ENCODE measurements at regions of chr14 and their contacts with region 1.

Region 1: DNA sequence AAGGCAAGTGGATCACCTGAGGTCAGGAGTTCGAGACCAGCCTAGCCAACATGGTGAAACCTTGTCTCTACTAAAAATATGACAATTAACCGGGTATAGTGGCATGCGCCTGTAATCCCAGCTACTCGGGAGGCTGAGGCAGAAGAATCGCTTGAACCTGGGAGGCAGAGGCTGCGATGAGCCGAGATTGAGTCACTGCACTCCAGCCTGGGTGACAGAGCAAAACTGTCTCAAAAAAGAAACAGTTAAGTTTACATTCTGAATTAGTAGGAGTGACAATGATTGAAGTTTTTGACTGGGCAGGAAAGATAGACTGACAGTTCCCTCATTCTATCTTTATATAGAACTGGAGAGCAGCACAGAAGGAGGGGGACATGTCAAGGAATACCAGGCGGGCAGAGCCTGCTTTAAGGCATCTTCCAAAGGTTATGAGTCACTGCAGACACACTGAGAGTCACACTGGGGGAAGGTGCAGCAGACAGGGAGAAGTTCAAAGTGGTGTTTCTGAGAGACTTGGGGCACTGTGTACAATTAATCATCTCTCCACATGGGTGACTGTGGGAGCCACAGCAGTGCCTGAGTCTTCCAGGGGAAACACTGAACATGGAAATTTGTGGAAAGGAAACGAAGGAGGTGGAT is 42.8 kb upstream of the RNASE3 start:
- DNase-seq: no peak
- H3K4me3 ChIP-seq: no peak overlapping the region
- H3K4me3 Mint-ChIP-seq: peak overlapping the region; percentile 38
- H3K27ac Mint-ChIP-seq: peak overlapping the region; percentile 82
- H3K4me1 ChIP-seq: peaks cover 15% of the 10 kb centered on the region
- H3K4me1 Mint-ChIP-seq: peaks cover 20% of the 10 kb centered on the region
- H3K27me3 ChIP-seq: no peaks in the 10 kb centered on the region
- H3K27me3 Mint-ChIP-seq: no peaks in the 10 kb centered on the region
- CTCF ChIP-seq: no peak

Region 2: GRCh38 chr14:20836668-20837338 is 11.6 kb before region 1 on chr14:
- CTCF ChIA-PET with region 1: interaction called, 16 read pairs
- POLR2A ChIA-PET with region 1: no interaction called
- intact Hi-C with region 1: loop called (anchors 1 kb)
- DNase-seq: peak; percentile 48 to 56
- H3K4me3 ChIP-seq: no peak overlapping the region
- H3K4me3 Mint-ChIP-seq: no peak overlapping the region
- H3K27ac Mint-ChIP-seq: no peak overlapping the region
- H3K4me1 ChIP-seq: peaks cover 9% of the 10 kb centered on the region
- H3K4me1 Mint-ChIP-seq: peaks cover 6% of the 10 kb centered on the region
- H3K27me3 ChIP-seq: no peaks in the 10 kb centered on the region
- H3K27me3 Mint-ChIP-seq: no peaks in the 10 kb centered on the region
- CTCF ChIP-seq: peak; percentile 38 to 74

Region 3: DNA sequence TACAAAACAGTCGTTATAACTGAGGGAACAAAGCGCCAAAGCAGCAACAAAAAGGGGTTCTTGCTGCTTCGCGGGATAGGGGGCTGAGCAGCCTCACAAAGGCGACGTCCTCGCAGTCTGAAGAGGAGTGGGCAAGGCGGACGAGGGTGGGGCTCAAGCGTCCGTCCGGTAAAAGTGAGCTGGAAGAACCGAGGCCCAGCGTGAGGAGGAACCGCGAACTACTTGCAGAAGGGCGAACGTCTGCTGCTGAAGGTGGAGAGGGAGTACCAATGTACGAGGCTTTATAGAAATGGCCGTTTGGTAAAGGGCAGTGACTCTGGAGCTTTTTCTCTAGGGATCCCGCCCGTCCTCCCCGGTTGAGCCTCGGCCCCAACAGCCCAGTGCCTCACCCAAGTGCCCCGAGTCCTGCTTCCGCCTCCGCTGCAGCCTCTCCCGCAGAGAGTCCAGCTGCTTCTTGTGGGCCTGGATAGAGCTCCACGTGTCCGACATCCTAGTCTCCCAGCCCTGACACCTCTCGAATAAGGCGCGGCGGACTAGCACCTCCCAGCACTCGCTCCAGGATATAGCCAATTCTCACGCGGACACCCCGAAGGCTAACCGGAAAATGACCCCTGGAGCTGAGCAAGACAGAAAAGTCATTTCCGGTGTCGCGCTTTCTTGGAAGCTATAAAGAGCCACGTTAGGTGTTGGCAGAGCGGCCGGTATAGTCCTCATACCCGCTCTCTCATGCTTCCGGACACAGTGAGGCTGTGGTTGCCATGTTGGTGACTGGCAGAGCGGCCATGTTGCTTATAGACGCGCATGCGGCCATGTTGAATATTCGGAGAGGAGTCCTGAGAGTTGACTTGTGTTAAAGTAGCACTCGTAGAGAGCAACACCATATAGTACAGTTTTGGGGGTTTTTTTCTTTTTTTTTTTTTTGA is 662.6 kb after region 1 on chr14 and contains the start of gene METTL3:
- CTCF ChIA-PET with region 1: no interaction called
- POLR2A ChIA-PET with region 1: no interaction called
- intact Hi-C with region 1: no loop called
- DNase-seq: peak; percentile 94 to 98
- H3K4me3 ChIP-seq: peak within 1 kb of the TSS; percentile 89
- H3K4me3 Mint-ChIP-seq: peak within 1 kb of the TSS; percentile 96
- H3K27ac Mint-ChIP-seq: peak within 1 kb of the TSS; percentile 97
- H3K4me1 ChIP-seq: no peaks in the 10 kb centered on the region
- H3K4me1 Mint-ChIP-seq: peaks cover 8% of the 10 kb centered on the region
- H3K27me3 ChIP-seq: no peaks in the 10 kb centered on the region
- H3K27me3 Mint-ChIP-seq: no peaks in the 10 kb centered on the region
- CTCF ChIP-seq: no peak
- total RNA-seq, gene METTL3: 40.1 and 43.8 TPM in 2 replicates